GM10248 (cell line): ENCODE measurements at regions of chr6 and their contacts with region 1.

Region 1: GRCh38 chr6:37018198-37019064 is 13.0 kb downstream of the FGD2 start:
- DNase-seq: peak; percentile 89
- CTCF ChIP-seq: peak; percentile 93

Region 2: GRCh38 chr6:36759148-36759759 is 259.2 kb before region 1 on chr6:
- CTCF ChIA-PET with region 1: interaction called, 168 read pairs
- POLR2A ChIA-PET with region 1: no interaction called
- DNase-seq: peak; percentile 89
- CTCF ChIP-seq: peak; percentile 97

Region 3: GRCh38 chr6:36874443-36875249 is 143.8 kb before region 1 on chr6 and contains the start of gene PPIL1:
- CTCF ChIA-PET with region 1: interaction called, 44 read pairs
- POLR2A ChIA-PET with region 1: no interaction called
- DNase-seq: peak; percentile 89
- CTCF ChIP-seq: no peak

Region 4: GRCh38 chr6:36985808-36986703 is 32.4 kb before region 1 on chr6 and contains the start of gene MTCH1:
- CTCF ChIA-PET with region 1: interaction called, 42 read pairs
- POLR2A ChIA-PET with region 1: interaction called, 5 read pairs
- DNase-seq: peak; percentile 98
- CTCF ChIP-seq: no peak

Region 5: DNA sequence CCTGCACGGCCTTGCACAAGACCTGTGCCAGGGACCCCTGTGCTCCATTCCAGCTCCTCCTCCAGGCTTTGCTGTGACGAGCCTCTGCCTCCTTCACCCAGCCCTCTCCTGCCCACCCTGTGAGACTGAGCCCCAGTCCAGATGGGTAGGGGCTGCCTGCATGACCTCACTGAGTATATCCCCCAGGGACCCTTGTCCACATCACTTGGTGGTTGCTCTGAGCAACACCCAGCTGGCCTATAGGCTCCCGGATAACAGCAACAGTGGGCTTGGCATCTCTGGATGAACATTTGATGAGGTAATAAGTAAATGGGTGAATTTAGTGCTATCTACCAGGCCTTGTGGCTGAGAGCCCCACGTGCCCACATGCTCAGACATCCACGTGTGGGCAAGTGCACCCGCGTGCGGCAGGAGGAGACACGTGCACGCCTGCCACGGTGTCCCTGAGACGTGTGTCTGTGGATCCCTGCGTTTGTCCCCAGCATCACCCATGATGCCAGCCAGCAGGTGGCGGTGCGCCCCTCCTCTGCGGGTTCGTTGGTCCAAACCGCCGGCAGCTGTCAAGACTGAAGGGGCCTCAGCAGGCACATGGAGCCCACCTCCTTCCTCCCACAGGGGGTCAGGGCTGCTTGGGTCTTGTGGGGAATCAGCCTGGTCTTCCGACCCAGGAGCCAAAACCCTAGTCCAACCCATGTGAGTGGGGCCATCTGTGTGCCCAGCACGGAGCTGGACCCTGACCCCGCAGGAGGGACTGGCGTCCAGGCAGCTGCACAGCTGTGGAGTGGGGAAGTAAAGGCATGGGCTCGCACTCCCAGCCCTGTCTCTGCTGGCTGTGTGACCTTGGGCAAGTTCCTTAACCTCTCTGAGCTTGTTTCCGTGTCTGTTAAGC is 33.0 kb after region 1 on chr6:
- CTCF ChIA-PET with region 1: interaction called, 101 read pairs
- POLR2A ChIA-PET with region 1: no interaction called
- DNase-seq: peak; percentile 88
- CTCF ChIP-seq: peak; percentile 92

Region 6: GRCh38 chr6:37207903-37208456 is 189.5 kb after region 1 on chr6:
- CTCF ChIA-PET with region 1: interaction called, 774 read pairs
- POLR2A ChIA-PET with region 1: interaction called, 3 read pairs
- DNase-seq: peak; percentile 81
- CTCF ChIP-seq: peak; percentile 62